ENCODE measurements at regions of chr16 and their contacts with region 1.

Region 1: DNA sequence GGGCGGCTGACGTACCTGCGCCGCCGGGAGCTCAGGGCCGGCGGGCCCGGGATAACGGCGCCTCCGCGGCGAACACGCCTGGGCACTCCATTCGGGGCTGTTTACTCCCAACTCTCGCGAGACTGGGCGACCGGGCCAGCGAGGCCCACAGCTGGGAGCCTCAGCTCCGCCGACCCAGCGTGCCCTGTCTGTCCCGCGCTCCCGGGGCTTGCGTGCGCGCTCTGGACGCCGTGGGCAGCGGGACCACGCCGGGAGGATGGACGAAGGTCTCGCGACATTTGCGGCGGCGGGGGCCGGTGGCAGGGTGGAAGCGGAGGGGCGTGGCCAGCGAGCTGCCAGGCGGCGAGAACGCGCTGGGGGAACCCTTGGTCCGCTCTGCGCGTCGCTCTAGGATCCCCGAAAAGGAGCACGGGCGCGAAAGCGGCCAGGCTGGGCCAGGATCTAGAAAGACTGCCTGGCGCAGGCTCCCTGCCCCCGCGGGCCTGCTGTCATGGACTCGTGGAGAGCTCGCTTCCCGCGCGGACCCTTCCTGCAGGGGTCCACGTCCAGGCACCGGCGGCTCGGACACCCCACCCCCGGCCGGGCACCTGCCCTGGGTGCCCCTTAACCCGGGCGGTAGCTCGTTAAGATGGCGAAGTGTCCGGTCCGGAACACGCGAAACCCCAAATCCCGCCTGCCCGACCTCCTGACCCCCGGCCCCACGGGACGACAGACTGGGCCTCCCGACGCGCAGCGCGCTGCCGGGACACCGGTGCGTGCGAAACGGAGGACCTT is at the start of gene MBTPS1:
- DNase-seq: peak; percentile 93 to 99 (median 96)
- ATAC-seq: peak; percentile 86 to 91 (median 90)
- H3K4me3 ChIP-seq: peak within 1 kb of the TSS; percentile 79 to 89
- H3K4me3 Mint-ChIP-seq: peak within 1 kb of the TSS; percentile 89 to 95 (median 90)
- H3K27ac ChIP-seq: peak within 1 kb of the TSS; percentile 76
- H3K27ac Mint-ChIP-seq: peak within 1 kb of the TSS; percentile 92
- H3K4me1 ChIP-seq: peaks cover 12 to 30% of the 10 kb centered on the region in 2 experiments
- H3K4me1 Mint-ChIP-seq: peaks cover 29 to 36% (median 31%) of the 10 kb centered on the region in 3 donors
- H3K27me3 ChIP-seq: no peaks in the 10 kb centered on the region
- H3K27me3 Mint-ChIP-seq: no peaks in the 10 kb centered on the region
- total RNA-seq, gene MBTPS1: 122 to 142 (median 131) TPM

Region 2: GRCh38 chr16:84072014-84072413 is 44.9 kb before region 1 on chr16:
- CTCF ChIA-PET with region 1: no interaction called
- POLR2A ChIA-PET with region 1: no interaction called
- DNase-seq: no peak
- ATAC-seq: no peak
- H3K4me3 ChIP-seq: no peak overlapping the region
- H3K4me3 Mint-ChIP-seq: no peak overlapping the region
- H3K27ac ChIP-seq: no peak overlapping the region
- H3K27ac Mint-ChIP-seq: no peak overlapping the region
- H3K4me1 ChIP-seq: no peaks in the 10 kb centered on the region
- H3K4me1 Mint-ChIP-seq: peaks cover 0 to 8% (median 2%) of the 10 kb centered on the region in 3 donors
- H3K27me3 ChIP-seq: no peaks in the 10 kb centered on the region
- H3K27me3 Mint-ChIP-seq: no peaks in the 10 kb centered on the region

Region 3: GRCh38 chr16:84186685-84187437 is 70.0 kb after region 1 on chr16 and contains the start of gene TAF1C:
- CTCF ChIA-PET with region 1: interaction called, 5 to 13 read pairs
- POLR2A ChIA-PET with region 1: interaction called in 1 of 2 experiments, 7 read pairs
- DNase-seq: peak; percentile 74 to 96 (median 85)
- ATAC-seq: peak; percentile 95 to 98 (median 96)
- H3K4me3 ChIP-seq: peak within 1 kb of the TSS; percentile 88 to 97
- H3K4me3 Mint-ChIP-seq: peak within 1 kb of the TSS; percentile 92 to 96 (median 93)
- H3K27ac ChIP-seq: peak within 1 kb of the TSS; percentile 52
- H3K27ac Mint-ChIP-seq: peak within 1 kb of the TSS; percentile 89 to 93
- H3K4me1 ChIP-seq: peaks cover 3 to 27% of the 10 kb centered on the region in 2 experiments
- H3K4me1 Mint-ChIP-seq: peaks cover 25 to 30% (median 28%) of the 10 kb centered on the region in 3 donors
- H3K27me3 ChIP-seq: no peaks in the 10 kb centered on the region
- H3K27me3 Mint-ChIP-seq: no peaks in the 10 kb centered on the region
- total RNA-seq, gene TAF1C: 81.9 to 97.6 (median 92.8) TPM

Region 4: GRCh38 chr16:84593825-84594724 is 477.2 kb after region 1 on chr16:
- CTCF ChIA-PET with region 1: no interaction called
- POLR2A ChIA-PET with region 1: interaction called in 1 of 2 experiments, 10 read pairs
- DNase-seq: peak; percentile 54 to 93 (median 84)
- ATAC-seq: peak; percentile 84 to 92 (median 86)
- H3K4me3 ChIP-seq: peak overlapping the region; percentile 56 to 58
- H3K4me3 Mint-ChIP-seq: peak overlapping the region; percentile 77 to 82 (median 82)
- H3K27ac ChIP-seq: peak overlapping the region; percentile 95
- H3K27ac Mint-ChIP-seq: peak overlapping the region; percentile 95 to 97
- H3K4me1 ChIP-seq: peaks cover 42 to 75% of the 10 kb centered on the region in 2 experiments
- H3K4me1 Mint-ChIP-seq: peaks cover 59 to 68% (median 68%) of the 10 kb centered on the region in 3 donors
- H3K27me3 ChIP-seq: peaks cover 0 to 7% of the 10 kb centered on the region in 2 experiments
- H3K27me3 Mint-ChIP-seq: no peaks in the 10 kb centered on the region

Measured in T-cell (primary cell).